K562 (cell line): ENCODE measurements at regions of chr7 and their contacts with region 1.

Region 1: GRCh38 chr7:142838461-142839213 is 16.2 kb upstream of the EPHB6 start:
- DNase-seq: peak; percentile 70 to 82 (median 72)
- ATAC-seq: peak; percentile 95
- H3K4me3 ChIP-seq: no peak overlapping the region
- H3K27ac ChIP-seq: peak overlapping the region; percentile 22; the same call in 2 of the 3 replicates
- H3K4me1 ChIP-seq: peaks cover 4 to 17% of the 10 kb centered on the region in 2 experiments; a peak in 3 of 5 replicates
- H3K27me3 ChIP-seq: no peaks in the 10 kb centered on the region
- CTCF ChIP-seq: no peak
- EP300 ChIP-seq: peak; percentile 71
- POLR2A ChIP-seq: no peak
- RAD21 ChIP-seq: no peak

Region 2: DNA sequence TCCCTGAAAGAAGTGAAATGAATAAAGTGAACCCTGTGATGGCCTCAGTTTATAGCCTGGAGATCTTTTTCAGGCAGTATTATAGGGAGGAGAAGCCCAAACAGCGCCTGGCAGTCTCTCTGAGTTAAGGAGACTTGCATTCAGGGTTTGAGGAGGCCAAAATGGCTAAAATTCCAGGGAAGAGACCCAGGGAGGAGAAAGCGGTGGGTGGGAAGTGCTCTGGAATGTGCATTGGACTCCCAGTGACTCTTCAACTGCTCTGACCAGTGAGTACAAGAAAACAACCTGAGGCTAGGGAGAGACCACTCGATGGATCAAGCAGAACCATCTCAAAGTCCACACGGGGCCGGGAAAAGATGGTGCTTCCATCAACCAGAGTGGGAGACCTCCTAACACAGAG is 19.1 kb before region 1 on chr7:
- CTCF ChIA-PET with region 1: no interaction called
- POLR2A ChIA-PET with region 1: no interaction called
- in situ Hi-C with region 1: no loop called
- intact Hi-C with region 1: loop called (anchors 2 kb)
- DNase-seq: no peak
- ATAC-seq: no peak
- H3K4me3 ChIP-seq: no peak overlapping the region
- H3K27ac ChIP-seq: no peak overlapping the region
- H3K4me1 ChIP-seq: no peaks in the 10 kb centered on the region
- H3K27me3 ChIP-seq: peaks cover 6% of the 10 kb centered on the region in 2 experiments; a peak in 4 of 5 replicates
- CTCF ChIP-seq: no peak
- EP300 ChIP-seq: no peak
- POLR2A ChIP-seq: no peak
- RAD21 ChIP-seq: no peak

Region 3: GRCh38 chr7:143018931-143019330 is 180.3 kb after region 1 on chr7:
- CTCF ChIA-PET with region 1: no interaction called
- POLR2A ChIA-PET with region 1: no interaction called
- in situ Hi-C with region 1: no loop called
- intact Hi-C with region 1: no loop called
- DNase-seq: no peak
- ATAC-seq: no peak
- H3K4me3 ChIP-seq: no peak overlapping the region
- H3K27ac ChIP-seq: no peak overlapping the region
- H3K4me1 ChIP-seq: no peaks in the 10 kb centered on the region
- H3K27me3 ChIP-seq: peaks cover 1 to 9% of the 10 kb centered on the region in 2 experiments; a peak in 2 of 5 replicates
- CTCF ChIP-seq: no peak
- EP300 ChIP-seq: no peak
- POLR2A ChIP-seq: no peak
- RAD21 ChIP-seq: no peak